Ovary (tissue), 10 donors: ENCODE measurements at regions of chr17 and their contacts with region 1.

Region 1: DNA sequence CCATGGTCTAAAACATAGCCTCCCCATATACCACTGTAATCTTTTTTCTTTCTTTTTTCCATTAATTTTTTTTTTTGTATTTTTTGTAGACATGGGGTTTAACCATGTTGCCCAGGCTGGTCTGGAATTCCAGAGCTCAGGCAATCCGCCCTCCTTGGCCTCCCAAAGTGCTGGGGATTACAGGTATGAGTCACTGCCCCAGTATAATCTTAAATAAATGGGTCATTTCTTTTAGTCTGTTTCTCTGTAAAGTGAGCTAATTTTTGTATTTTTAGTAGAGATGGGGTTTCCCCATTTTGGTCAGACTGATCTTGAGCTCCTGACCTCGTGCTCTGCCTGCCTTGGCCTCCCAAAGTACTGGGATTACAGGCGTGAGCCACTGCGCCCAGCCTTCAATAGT is 5.7 kb upstream of the NME1 start:
- DNase-seq: no peak
- H3K4me3 ChIP-seq: no peak overlapping the region
- H3K27ac ChIP-seq: no peak overlapping the region
- H3K4me1 ChIP-seq: no peaks in the 10 kb centered on the region
- H3K27me3 ChIP-seq: no peaks in the 10 kb centered on the region
- CTCF ChIP-seq: no peak
- EP300 ChIP-seq: no peak
- POLR2A ChIP-seq: no peak

Region 2: GRCh38 chr17:50995645-50996044 is 152.0 kb before region 1 on chr17:
- intact Hi-C with region 1: loop called (anchors 5 to 10 kb)
- DNase-seq: no peak
- H3K4me3 ChIP-seq: no peak overlapping the region
- H3K27ac ChIP-seq: no peak overlapping the region
- H3K4me1 ChIP-seq: no peaks in the 10 kb centered on the region
- H3K27me3 ChIP-seq: no peaks in the 10 kb centered on the region
- CTCF ChIP-seq: no peak
- EP300 ChIP-seq: no peak
- POLR2A ChIP-seq: no peak

Region 3: DNA sequence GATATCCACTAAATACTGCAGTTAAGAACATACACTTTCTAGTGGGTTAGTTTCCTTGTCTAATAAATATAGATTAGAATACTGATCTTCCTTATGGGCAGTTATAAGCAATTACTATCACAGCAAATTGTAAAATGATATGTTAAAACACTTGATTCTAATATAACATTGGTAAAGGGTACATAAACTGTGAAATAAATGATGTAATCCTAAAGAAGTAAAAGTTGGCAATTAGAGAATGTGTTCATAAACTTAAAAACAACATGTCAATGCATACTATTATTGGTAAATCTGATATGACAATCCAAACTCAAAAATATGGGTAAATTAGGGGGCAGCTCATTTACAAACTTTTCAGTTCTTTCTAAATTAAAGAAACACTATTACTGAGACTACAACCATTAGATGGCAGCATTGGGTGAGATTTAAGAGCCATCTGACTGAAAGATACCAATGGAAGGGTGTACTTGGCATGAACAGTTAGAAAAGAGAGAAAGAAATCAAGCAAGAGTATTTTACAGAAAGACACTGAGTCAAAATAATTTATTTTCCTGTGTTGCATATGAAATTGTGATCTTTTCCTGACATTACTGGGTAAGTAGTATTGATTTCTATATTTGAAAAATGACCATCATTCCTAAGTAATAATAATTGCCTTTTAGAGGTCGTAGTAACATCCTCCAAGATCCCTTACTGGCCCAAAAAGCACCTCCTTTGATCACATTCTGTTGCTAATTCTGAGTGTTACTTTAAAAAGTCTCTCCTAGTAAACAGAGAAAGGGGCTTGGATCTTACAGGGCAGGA is 146.6 kb before region 1 on chr17:
- intact Hi-C with region 1: loop called (anchors 5 to 10 kb)
- DNase-seq: no peak
- H3K4me3 ChIP-seq: no peak overlapping the region
- H3K27ac ChIP-seq: no peak overlapping the region
- H3K4me1 ChIP-seq: no peaks in the 10 kb centered on the region
- H3K27me3 ChIP-seq: no peaks in the 10 kb centered on the region
- CTCF ChIP-seq: peak; percentile 45 to 67 (median 55)
- EP300 ChIP-seq: no peak
- POLR2A ChIP-seq: no peak

Region 4: DNA sequence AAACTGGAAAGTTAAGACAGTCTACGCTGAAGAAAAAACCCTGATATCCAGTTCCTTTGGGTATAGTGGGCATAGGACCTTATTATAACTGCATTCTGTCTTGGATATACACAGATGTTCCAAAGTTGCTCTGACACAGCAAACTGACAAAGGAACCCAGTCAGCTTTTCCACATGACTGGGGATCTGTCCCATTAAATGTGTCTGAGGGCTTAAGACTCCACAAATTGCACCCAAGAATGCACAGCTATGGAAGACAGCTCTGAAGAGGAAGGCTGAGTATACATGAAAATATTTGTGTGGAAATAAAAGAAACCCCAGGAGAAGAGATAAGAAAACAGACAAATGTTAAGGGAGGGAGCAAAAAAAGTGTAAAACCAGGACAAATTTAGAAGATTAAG is 141.0 kb before region 1 on chr17:
- intact Hi-C with region 1: loop called in 3 of 4 experiments (anchors 5 to 10 kb)
- DNase-seq: no peak
- H3K4me3 ChIP-seq: no peak overlapping the region
- H3K27ac ChIP-seq: no peak overlapping the region
- H3K4me1 ChIP-seq: no peaks in the 10 kb centered on the region
- H3K27me3 ChIP-seq: no peaks in the 10 kb centered on the region
- CTCF ChIP-seq: no peak
- EP300 ChIP-seq: no peak
- POLR2A ChIP-seq: no peak